Posterior vena cava (tissue), 2 donors: ENCODE measurements at regions of chr18 and their contacts with region 1.

Region 1: GRCh38 chr18:3593904-3594661 is 144.1 kb downstream of the TGIF1 start:
- DNase-seq: peak; percentile 95

Region 2: DNA sequence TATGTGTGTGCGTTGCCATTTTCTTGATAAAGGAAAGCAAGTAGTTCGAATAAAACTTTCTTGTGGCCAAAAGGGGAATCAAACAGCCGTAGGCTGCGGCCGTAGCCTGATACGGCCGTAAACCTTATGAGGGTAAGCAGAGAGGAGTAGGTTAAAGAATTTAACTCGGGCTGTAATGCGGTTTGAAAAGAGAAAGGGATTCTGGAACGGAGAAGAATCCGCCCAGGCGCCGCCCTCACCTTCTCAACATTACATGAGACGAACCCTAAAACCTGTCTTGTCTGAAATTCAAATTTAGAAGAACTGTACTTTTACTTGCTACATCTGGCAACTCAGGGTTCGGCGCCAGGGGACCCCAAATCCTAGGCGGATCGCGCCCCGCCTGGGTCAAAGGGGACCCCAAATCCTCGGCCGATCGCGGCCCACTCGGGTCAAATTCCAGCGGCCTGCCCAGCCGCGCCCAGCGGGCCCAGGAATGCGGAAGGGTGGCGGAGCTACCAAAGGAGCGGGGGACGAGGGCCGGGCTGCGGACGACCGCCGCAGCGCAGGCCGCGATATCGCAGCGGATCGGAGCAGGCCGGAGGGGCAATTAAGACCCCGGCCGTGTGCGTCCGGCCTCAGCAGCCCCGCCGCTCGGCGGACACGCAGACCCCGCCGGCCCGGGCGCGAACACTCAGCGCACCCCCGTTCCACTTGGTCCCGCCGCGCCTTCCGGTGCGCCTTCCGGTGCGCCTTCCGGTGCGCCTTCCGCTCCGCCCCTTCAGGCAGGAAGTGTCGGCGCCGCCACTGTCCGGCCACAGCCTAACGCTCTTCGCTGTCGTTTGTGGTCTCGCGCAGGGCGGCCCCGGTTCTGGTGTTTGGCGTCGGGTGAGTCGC is 332.5 kb before region 1 on chr18 and contains the start of gene MYL12B:
- intact Hi-C with region 1: loop called in 1 of 2 experiments (anchors 10 kb)
- DNase-seq: peak; percentile 96
- total RNA-seq, gene MYL12B: 243 to 267 TPM

Region 3: DNA sequence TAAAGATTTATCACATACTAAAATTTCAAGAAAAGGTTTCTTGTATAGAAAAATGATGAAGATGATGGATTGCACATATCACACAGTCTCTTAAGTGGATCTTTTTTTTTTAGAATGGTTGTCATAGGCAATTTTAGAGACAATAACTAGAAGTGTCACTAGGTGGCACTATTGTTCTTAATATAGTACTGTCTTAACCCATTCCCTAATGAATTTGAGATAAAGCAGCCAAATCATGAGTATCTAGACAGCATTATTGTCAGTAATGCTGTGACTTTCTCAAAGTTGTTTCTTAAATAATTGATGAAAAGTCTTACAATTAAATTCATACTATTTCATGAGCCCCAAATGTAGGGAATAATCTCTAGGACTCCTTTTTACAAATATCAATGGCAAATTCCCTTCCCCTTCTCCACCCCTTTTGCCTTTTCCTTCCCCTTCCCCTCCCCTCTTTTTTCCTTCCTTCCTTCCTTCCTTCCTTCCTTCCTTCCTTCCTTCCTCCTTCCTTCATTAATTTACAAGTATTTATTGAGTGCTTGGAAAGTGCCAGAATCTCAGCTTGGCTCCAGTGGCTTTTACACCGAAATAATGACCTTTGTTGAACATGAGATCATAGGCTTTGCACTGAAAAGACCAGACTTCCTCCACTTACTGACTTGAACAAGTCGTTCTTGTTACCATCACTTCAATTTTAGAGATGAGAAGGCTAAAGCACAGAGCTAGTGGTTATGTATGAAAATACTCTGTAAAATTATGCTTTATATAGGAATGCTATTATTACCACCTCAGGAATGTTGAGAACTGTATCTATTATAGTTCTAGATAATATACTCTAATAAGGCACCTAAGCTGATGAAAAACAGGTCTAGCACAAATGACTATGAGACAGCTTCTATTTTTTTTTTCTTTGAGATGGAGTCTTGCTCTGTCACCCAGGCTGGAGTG is 312.4 kb before region 1 on chr18:
- intact Hi-C with region 1: loop called (anchors 10 kb)
- DNase-seq: no peak

Region 4: GRCh38 chr18:3541549-3542386 is 52.3 kb before region 1 on chr18:
- intact Hi-C with region 1: no loop called
- DNase-seq: no peak

Region 5: DNA sequence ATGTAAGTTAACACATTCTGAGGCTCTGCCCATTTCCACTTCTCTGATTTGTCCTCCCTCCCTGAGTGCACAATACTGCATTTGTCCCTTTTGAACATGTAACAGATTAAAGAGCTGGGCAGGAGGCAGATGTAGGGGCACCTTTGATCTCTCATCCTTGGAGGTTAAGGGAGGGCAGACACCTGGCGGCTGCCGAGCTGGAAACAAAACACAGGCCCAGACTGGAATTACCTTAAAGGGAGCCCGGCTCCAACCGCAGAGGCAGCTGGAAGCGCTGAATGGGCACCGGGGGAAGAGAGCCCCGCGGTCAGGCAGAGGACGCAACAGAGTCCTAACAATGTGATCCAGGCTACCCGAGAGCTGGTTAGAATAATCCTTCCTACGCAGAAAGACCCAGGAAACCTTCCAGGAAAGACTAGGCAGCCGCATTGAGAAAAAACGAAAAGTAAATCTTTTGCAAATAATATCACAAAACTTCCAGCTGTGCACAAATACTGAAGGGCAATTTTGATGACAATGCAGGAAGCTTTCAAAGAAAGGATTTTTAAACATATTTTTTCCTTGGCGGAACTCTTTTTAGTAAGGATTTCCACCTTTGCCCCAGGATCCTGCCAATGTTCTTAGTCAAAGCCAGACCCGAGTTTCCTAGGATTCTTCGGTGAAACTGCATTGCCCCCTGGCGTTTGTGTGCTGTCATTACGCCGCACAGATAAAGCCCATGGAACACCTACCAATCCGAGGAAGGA is 71.9 kb after region 1 on chr18:
- intact Hi-C with region 1: loop called (anchors 5 to 10 kb)
- DNase-seq: peak; percentile 93

Region 6: DNA sequence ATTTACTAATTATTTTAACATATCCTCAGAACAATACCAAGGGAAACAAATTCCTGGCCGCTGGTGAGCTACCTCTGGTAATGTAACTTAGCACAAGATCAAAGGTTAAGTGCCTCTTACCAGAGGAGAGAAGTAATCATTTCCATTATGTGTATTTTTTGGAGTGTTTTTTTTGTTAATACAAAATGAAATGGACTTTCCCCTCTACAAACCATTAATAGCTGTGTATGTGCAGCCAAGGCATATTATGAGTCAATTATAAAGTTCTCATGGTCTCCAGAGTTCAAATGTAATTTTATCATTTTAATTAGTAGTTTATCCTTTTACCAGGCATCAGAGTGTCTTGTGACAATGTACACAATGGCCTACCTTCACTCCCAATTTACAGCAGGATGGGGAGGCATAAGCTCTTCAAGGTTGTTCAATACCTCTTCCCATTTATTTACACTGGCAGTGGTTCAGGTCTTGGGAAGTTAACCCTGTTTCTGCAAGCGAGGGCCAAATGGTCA is 98.1 kb after region 1 on chr18:
- intact Hi-C with region 1: no loop called
- DNase-seq: no peak